Panc1 (cell line): ENCODE measurements at regions of chr7 and their contacts with region 1.

Region 1: GRCh38 chr7:7201578-7202374 is 19.4 kb downstream of the C1GALT1 start:
- DNase-seq: no peak
- ATAC-seq: peak; percentile 83
- H3K4me3 ChIP-seq: peak overlapping the region in 1 of 2 experiments; percentile 10; a peak in 1 of 4 replicates
- H3K27ac ChIP-seq: no peak overlapping the region
- H3K4me1 ChIP-seq: peaks cover 8% of the 10 kb centered on the region; the same call in 1 of the 2 replicates
- H3K27me3 ChIP-seq: no peaks in the 10 kb centered on the region
- CTCF ChIP-seq: no peak

Region 2: GRCh38 chr7:6831018-6831725 is 370.6 kb before region 1 on chr7:
- CTCF ChIA-PET with region 1: no interaction called
- POLR2A ChIA-PET with region 1: no interaction called
- in situ Hi-C with region 1: no loop called
- intact Hi-C with region 1: no loop called
- DNase-seq: no peak
- ATAC-seq: no peak
- H3K4me3 ChIP-seq: no peak overlapping the region
- H3K27ac ChIP-seq: no peak overlapping the region
- H3K4me1 ChIP-seq: no peaks in the 10 kb centered on the region
- H3K27me3 ChIP-seq: peaks cover 15% of the 10 kb centered on the region
- CTCF ChIP-seq: no peak

Region 3: DNA sequence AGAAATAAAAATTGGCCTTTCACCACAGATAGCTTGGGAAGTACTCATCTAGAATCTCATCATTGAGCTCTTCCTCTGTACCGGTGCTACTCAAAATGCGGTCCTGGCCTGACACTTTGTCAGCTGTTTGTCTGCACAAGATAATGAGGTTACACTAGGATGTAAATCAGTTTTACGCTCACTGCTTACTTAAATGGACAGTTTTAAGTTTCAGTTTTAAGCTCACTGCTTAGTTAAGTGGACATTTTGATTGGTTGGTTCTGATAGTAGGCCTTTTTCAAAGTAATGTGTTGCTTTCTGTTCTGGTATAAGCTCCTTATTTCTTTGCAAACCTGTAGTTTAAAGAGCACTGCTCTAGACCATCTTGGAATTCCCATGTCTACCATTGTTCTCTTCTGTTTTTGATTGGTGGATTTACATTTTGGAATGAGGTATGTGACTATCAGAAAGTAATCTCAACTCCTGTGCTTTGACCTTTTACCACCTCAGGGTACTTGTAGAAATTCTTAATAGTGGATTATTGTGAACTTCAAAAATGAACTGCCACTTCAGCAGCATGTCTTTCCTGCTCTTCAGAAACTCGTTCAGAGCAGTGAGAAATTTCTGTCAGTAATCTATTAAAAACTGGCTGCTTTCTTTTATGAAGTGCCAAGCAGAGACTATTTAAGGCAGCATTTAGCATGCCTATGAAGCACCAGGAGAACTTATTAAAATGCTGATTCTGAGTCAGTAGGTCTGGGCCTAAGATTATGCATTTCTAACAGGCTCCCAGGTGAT is 35.6 kb after region 1 on chr7:
- CTCF ChIA-PET with region 1: interaction called, 13 read pairs
- POLR2A ChIA-PET with region 1: no interaction called
- in situ Hi-C with region 1: no loop called
- intact Hi-C with region 1: no loop called
- DNase-seq: no peak
- ATAC-seq: no peak
- H3K4me3 ChIP-seq: no peak overlapping the region
- H3K27ac ChIP-seq: no peak overlapping the region
- H3K4me1 ChIP-seq: no peaks in the 10 kb centered on the region
- H3K27me3 ChIP-seq: no peaks in the 10 kb centered on the region
- CTCF ChIP-seq: no peak

Region 4: DNA sequence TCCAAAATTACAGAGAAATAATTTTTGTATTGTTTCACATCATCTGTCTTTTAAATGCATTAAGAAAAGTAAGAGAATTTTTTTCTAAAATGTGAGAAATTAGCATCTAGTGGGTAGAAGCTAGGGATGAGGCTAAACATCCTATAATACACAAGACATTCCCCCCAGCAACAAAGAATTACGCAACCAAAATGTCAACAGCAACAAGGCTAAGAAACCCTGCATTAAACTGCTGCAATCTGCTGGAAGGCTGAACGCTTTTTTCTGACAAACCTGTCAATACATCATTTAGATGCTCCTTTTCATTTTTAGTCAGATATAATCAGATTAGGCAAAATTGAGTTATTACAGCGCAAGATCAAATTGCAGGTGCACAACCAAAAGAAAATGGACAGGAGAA is 142.8 kb after region 1 on chr7:
- CTCF ChIA-PET with region 1: no interaction called
- POLR2A ChIA-PET with region 1: no interaction called
- in situ Hi-C with region 1: no loop called
- intact Hi-C with region 1: no loop called
- DNase-seq: no peak
- ATAC-seq: no peak
- H3K4me3 ChIP-seq: no peak overlapping the region
- H3K27ac ChIP-seq: no peak overlapping the region
- H3K4me1 ChIP-seq: no peaks in the 10 kb centered on the region
- H3K27me3 ChIP-seq: peaks cover 11% of the 10 kb centered on the region
- CTCF ChIP-seq: no peak

Region 5: DNA sequence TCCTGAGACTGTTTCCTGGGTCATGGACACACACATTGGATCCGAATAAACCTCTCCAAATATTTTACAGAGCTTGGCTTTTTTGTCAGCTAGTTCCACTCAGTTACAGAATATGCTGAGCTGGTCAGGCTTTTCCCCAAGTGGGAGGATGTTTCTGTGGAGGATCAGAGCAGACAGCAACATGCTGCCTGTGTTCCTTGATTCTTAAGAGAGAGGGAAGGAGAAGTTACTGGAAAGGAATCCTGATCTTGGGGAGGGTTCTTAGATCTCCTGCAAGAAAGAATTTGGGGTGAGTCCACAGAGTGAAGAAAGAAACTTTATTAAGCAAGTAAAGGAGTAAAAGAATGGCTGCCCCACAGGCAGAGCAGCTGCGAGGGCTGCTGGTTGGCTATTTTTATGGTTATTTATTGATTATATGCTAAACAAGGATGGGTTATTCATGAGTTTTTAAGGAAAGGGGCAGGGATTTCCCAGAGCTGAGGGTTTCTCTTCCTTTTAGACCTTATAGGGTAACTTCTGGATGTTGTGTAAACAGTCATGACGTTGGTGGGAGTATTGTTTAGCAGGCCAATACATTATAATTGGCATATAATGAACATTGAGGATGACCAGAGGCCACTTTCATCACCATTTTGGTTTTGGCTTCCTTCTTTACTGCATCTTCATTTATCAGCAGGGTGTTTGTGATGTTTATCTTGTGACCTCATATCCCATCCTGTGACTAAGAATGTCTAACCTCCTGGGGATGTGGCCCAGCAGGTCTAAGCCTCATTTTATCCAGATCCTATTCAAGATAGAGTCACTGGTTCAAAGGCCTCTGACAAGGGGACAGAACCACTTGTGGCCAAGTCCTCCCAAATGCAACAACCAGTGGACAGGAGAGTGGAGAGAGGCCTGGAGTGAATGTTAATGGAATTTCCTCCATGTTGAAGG is 593.7 kb after region 1 on chr7:
- CTCF ChIA-PET with region 1: no interaction called
- POLR2A ChIA-PET with region 1: no interaction called
- in situ Hi-C with region 1: no loop called
- intact Hi-C with region 1: no loop called
- DNase-seq: peak; percentile 64
- ATAC-seq: peak; percentile 83
- H3K4me3 ChIP-seq: no peak overlapping the region
- H3K27ac ChIP-seq: no peak overlapping the region
- H3K4me1 ChIP-seq: peaks cover 12% of the 10 kb centered on the region
- H3K27me3 ChIP-seq: no peaks in the 10 kb centered on the region
- CTCF ChIP-seq: no peak